PC-3 (cell line): ENCODE measurements at regions of chr6 and their contacts with region 1.

Region 1: GRCh38 chr6:110815217-110816109 is at the start of gene CDK19:
- DNase-seq: peak; percentile 96
- ATAC-seq: peak; percentile 87
- H3K4me3 ChIP-seq: peak within 1 kb of the TSS; percentile 94
- H3K27ac ChIP-seq: peak within 1 kb of the TSS; percentile 86
- H3K4me1 ChIP-seq: peaks cover 29% of the 10 kb centered on the region
- H3K27me3 ChIP-seq: no peaks in the 10 kb centered on the region
- CTCF ChIP-seq: no peak
- total RNA-seq, gene CDK19: 4.2 and 5.4 TPM in 2 replicates

Region 2: GRCh38 chr6:110699780-110700179 is 115.7 kb before region 1 on chr6:
- CTCF ChIA-PET with region 1: no interaction called
- POLR2A ChIA-PET with region 1: no interaction called
- intact Hi-C with region 1: loop called (anchors 2 kb)
- DNase-seq: no peak
- ATAC-seq: no peak
- H3K4me3 ChIP-seq: no peak overlapping the region
- H3K27ac ChIP-seq: peak overlapping the region; percentile 93
- H3K4me1 ChIP-seq: peaks cover 22% of the 10 kb centered on the region
- H3K27me3 ChIP-seq: no peaks in the 10 kb centered on the region
- CTCF ChIP-seq: no peak

Region 3: GRCh38 chr6:110949679-110950285 is 134.3 kb after region 1 on chr6:
- CTCF ChIA-PET with region 1: interaction called, 4 read pairs
- POLR2A ChIA-PET with region 1: interaction called, 5 read pairs
- intact Hi-C with region 1: loop called (anchors 2 kb)
- DNase-seq: peak; percentile 50
- ATAC-seq: no peak
- H3K4me3 ChIP-seq: no peak overlapping the region
- H3K27ac ChIP-seq: no peak overlapping the region
- H3K4me1 ChIP-seq: peaks cover 28% of the 10 kb centered on the region
- H3K27me3 ChIP-seq: no peaks in the 10 kb centered on the region
- CTCF ChIP-seq: peak; percentile 57

Region 4: DNA sequence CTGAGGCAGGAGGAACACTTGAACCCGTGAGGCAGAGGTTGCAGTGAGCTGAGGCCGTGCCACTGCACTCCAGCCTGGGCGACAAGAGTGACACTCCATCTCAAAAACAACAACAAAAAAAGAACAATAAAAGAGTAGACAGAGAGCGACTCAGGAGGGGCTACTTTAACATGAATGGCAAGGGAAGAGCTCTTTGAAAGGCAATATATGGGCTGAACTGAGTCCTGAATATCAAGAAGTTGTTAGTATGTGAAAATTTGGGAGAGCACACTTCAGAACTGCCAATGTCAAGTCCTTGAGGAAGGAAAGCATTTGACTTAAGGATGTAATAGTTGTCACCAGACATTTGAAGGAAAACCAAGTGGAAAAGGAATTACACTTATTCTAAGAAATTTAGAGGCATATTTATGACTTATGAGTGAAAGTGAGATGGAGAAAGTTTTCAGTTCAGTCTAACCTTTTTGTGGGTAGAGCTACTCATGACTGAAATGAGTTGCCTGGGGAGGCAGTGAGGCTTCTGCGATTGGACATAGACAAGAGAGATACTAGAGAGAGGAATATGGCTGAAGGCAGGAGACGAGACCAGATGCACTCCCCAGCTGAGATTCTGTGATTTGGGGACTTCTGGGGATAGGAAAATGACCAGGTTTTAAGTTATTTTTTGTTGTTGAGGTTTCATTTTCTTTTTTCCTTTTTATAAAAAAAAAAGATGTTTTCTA is 223.2 kb after region 1 on chr6:
- CTCF ChIA-PET with region 1: no interaction called
- POLR2A ChIA-PET with region 1: no interaction called
- intact Hi-C with region 1: no loop called
- DNase-seq: no peak
- ATAC-seq: no peak
- H3K4me3 ChIP-seq: no peak overlapping the region
- H3K27ac ChIP-seq: no peak overlapping the region
- H3K4me1 ChIP-seq: no peaks in the 10 kb centered on the region
- H3K27me3 ChIP-seq: no peaks in the 10 kb centered on the region
- CTCF ChIP-seq: no peak